ENCODE measurements at regions of chr11 and their contacts with region 1.

Region 1: GRCh38 chr11:94762208-94762607 is 5.9 kb upstream of the AMOTL1 start:
- DNase-seq: no peak
- ATAC-seq: peak; percentile 50; the same call in 2 of the 3 replicates
- H3K4me3 ChIP-seq: no peak overlapping the region
- H3K27ac ChIP-seq: no peak overlapping the region
- H3K4me1 ChIP-seq: no peaks in the 10 kb centered on the region
- H3K27me3 ChIP-seq: peaks cover under 1 to 6% of the 10 kb centered on the region in 2 experiments; a peak in 2 of 4 replicates
- CTCF ChIP-seq: peak in 2 of 3 experiments; percentile 18 to 20; a peak in 1 of 6 replicates
- EP300 ChIP-seq: no peak
- POLR2A ChIP-seq: no peak
- RAD21 ChIP-seq: 0 out of 2 replicates have a peak, but pooled peaks have one; percentile 3

Region 2: GRCh38 chr11:94638902-94639373 is 123.3 kb before region 1 on chr11:
- CTCF ChIA-PET with region 1: interaction called, 4 read pairs
- POLR2A ChIA-PET with region 1: no interaction called
- RAD21 ChIA-PET with region 1: no interaction called
- SMC1A ChIA-PET with region 1: no interaction called
- in situ Hi-C with region 1: no loop called
- intact Hi-C with region 1: loop called (anchors 5 kb)
- DNase-seq: no peak
- ATAC-seq: peak; percentile 40
- H3K4me3 ChIP-seq: no peak overlapping the region
- H3K27ac ChIP-seq: no peak overlapping the region
- H3K4me1 ChIP-seq: no peaks in the 10 kb centered on the region
- H3K27me3 ChIP-seq: no peaks in the 10 kb centered on the region
- CTCF ChIP-seq: no peak
- EP300 ChIP-seq: no peak
- POLR2A ChIP-seq: no peak
- RAD21 ChIP-seq: no peak

Region 3: DNA sequence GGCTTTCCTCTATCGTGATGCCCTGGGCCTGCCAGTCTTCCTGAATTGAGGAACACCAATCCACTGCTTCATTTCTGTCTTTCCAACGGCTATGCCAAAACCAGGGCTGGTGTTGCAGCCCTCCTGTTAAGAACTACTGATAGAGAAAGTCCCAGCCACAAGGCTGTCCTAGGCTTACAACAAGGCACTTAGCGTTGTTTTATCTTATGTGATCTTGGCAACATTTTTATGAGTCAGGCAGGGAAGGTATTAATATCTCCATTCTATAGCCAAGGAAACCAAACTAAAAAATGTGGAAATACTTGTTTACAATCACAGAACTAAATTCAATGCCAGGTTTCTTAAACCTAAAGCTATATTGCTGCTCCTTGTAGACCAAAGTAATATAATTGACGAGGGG is 84.0 kb before region 1 on chr11:
- CTCF ChIA-PET with region 1: no interaction called
- POLR2A ChIA-PET with region 1: no interaction called
- RAD21 ChIA-PET with region 1: no interaction called
- SMC1A ChIA-PET with region 1: no interaction called
- in situ Hi-C with region 1: no loop called
- intact Hi-C with region 1: no loop called
- DNase-seq: no peak
- ATAC-seq: no peak
- H3K4me3 ChIP-seq: no peak overlapping the region
- H3K27ac ChIP-seq: no peak overlapping the region
- H3K4me1 ChIP-seq: no peaks in the 10 kb centered on the region
- H3K27me3 ChIP-seq: no peaks in the 10 kb centered on the region; a peak in 2 of 4 replicates
- CTCF ChIP-seq: no peak
- EP300 ChIP-seq: no peak
- POLR2A ChIP-seq: no peak
- RAD21 ChIP-seq: no peak

Region 4: GRCh38 chr11:95092549-95093324 is 330.5 kb after region 1 on chr11:
- CTCF ChIA-PET with region 1: no interaction called
- POLR2A ChIA-PET with region 1: no interaction called
- RAD21 ChIA-PET with region 1: no interaction called
- SMC1A ChIA-PET with region 1: no interaction called
- in situ Hi-C with region 1: no loop called
- intact Hi-C with region 1: no loop called
- DNase-seq: no peak
- ATAC-seq: peak; percentile 37
- H3K4me3 ChIP-seq: peak overlapping the region; percentile 6; the same call in 1 of the 2 replicates
- H3K27ac ChIP-seq: no peak overlapping the region; the same call in 1 of the 2 replicates
- H3K4me1 ChIP-seq: peaks cover 45% of the 10 kb centered on the region
- H3K27me3 ChIP-seq: no peaks in the 10 kb centered on the region
- CTCF ChIP-seq: peak; percentile 42 to 77 (median 69)
- EP300 ChIP-seq: no peak
- POLR2A ChIP-seq: no peak
- RAD21 ChIP-seq: peak; percentile 27; the same call in 1 of the 2 replicates

Measured in GM12878 (cell line).